ENCODE measurements at regions of chr12 and their contacts with region 1.

Region 1: GRCh38 chr12:38653650-38654049 is 251.7 kb downstream of the CPNE8 start:
- DNase-seq: no peak
- H3K4me3 ChIP-seq: no peak overlapping the region
- H3K27ac ChIP-seq: no peak overlapping the region
- H3K4me1 ChIP-seq: no peaks in the 10 kb centered on the region
- H3K27me3 ChIP-seq: no peaks in the 10 kb centered on the region
- CTCF ChIP-seq: no peak

Region 2: DNA sequence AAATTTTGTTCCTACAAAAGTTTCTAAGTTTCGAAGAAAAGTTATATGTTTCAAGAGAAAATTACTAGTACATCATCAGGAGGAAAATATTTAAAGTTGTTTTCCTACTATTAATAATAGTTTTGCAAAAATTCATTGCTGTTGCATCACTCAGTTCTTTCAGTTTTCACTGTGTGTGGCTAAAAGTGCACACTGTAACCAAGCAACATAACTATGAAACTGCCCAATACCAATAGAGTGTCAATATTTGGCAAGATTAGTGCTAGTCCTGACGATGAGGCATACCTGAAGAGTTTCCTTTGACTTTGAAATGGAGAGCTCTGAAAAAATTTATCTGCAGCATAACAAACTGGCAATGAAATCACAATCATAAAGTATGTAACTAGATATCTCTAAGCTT is 57.4 kb after region 1 on chr12:
- CTCF ChIA-PET with region 1: no interaction called
- POLR2A ChIA-PET with region 1: no interaction called
- intact Hi-C with region 1: loop called (anchors 10 kb)
- DNase-seq: no peak
- H3K4me3 ChIP-seq: no peak overlapping the region
- H3K27ac ChIP-seq: no peak overlapping the region
- H3K4me1 ChIP-seq: no peaks in the 10 kb centered on the region
- H3K27me3 ChIP-seq: no peaks in the 10 kb centered on the region
- CTCF ChIP-seq: no peak

Region 3: DNA sequence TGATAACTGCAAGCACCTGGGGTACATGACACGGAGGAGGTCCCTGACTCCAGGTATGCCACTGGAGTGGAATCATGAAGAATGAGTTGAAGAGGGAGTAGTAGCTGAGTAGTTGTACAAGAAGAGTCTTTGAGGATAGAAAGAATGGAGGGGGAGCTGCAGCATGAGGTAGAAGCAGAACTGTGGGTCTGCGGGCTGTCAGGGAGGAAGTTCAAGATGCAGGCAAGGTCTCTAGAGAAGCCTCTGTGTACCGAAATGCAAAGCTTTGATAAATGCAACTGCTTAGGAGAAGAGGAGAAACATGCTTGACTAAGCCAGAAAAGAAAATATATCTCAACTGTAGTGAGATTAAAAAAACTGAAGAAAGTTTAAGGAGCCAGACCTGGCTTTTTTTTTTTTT is 160.3 kb after region 1 on chr12:
- CTCF ChIA-PET with region 1: no interaction called
- POLR2A ChIA-PET with region 1: no interaction called
- intact Hi-C with region 1: no loop called
- DNase-seq: no peak
- H3K4me3 ChIP-seq: no peak overlapping the region
- H3K27ac ChIP-seq: no peak overlapping the region
- H3K4me1 ChIP-seq: no peaks in the 10 kb centered on the region
- H3K27me3 ChIP-seq: no peaks in the 10 kb centered on the region
- CTCF ChIP-seq: no peak